Posterior cingulate gyrus (tissue), 11 donors: ENCODE measurements at regions of chr3 and their contacts with region 1.

Region 1: DNA sequence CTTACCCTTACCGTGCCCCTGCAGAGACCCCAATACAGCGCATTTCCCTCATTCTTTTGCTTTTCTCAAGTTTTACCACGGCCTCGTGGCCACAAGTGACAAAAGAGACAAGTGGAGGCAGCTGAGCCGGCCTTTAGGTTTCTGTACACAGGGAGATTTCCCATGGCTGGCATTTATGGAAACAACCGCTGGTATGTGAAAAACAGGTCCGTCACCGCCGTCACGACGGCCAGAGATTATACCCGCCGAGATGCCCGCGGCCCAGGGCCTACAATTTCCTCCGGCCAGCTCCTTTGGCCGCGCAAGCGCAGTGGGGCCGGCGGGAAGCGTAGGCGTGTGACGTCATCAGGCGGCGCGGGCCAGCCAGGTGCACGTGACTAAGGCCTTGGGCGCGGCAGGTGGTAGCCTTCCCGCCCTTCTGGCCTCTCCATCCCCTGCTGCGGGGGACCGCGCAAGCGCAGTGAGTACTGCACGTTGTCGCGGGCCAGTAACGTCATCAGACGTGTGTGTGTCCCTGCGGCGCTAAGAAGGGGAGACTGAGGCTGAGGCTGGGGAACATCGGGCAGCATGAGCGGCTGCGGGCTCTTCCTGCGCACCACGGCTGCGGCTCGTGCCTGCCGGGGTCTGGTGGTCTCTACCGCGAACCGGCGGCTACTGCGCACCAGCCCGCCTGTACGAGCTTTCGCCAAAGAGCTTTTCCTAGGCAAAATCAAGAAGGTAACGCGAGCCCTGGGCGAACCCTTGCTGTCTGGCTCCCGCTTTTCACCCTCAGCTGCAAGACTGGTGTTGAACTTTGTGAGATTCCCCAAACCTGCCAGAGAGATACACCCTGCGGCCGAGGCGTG is at the start of gene ACAD9:
- DNase-seq: peak; percentile 95 to 100 (median 98)

Region 2: DNA sequence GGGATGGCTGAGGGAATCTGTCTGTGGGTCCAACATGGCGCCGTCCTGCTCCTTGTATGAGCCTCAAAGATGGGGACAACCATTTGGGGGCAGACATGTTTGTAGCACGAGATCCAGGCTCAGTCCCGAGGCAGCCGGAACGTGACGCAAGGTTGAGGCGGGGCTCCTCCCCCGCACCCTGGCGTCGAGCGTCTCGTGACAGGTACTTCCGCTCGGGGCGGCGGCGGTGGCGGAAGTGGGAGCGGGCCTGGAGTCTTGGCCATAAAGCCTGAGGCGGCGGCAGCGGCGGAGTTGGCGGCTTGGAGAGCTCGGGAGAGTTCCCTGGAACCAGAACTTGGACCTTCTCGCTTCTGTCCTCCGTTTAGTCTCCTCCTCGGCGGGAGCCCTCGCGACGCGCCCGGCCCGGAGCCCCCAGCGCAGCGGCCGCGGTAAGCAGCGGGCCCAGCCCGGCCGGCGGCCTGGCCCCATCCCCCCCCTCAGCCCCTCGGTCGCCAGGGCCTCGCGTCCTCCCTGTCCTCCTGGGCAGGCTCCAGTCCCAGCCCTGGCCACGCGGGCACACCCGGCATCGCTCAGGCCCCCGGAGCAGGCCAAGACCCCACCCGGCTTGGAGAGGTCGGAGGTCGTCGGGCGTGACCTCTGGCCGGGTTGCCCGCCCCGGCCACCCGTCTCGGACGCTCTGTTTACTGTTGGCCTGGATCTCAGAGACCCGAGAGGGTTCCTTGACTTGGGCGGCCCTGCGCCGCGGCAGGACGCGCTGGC is 153.2 kb before region 1 on chr3 and contains the start of gene RAB7A:
- intact Hi-C with region 1: loop called (anchors 10 kb)
- DNase-seq: peak; percentile 96 to 99 (median 98)

Region 3: GRCh38 chr3:128804017-128804810 is 75.1 kb before region 1 on chr3:
- intact Hi-C with region 1: no loop called
- DNase-seq: no peak